Activated CD4-positive, alpha-beta T cell treated with anti-CD3 and anti-CD28 coated beads, Interleukin-2, amount 10 ng/mL, durations not matched to agents 24 days and 14 days (primary cell): ENCODE measurements at regions of chr16 and their contacts with region 1.

Region 1: DNA sequence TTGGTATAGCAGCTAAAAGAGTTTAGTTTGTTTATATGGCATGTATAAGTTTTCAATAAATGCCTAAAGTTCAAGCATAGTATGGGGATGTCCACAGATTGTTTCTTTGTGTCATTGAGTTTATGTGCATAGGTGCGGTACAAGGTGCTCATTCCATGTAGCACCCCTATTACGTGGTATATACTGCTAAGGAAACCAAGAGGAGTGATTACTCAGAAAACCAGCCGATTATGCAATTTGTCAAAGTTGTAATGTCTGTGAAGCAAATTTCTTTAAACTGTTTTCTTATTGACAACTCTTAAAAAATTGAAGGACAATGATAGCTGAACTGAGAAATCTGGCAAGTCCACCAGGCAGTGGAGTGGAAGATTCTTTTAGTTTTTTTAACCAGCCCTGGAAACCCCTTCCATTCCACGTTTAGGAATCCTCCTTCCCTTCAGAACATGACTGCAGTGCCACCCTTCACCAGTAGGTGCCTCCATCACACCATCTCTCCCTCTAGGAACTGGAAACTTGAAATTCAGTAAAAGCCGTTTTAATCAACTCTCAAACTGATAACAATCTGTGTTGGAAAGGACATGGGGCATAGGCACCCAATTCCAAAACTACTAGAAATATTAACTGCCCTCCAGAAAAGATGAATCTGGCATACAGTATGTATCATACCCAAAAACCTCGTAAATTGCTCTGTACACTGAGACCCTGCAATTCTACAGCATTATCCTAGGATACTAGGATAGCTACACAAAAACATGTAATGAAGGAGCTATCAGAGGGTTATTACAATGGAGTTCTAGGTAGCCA is 43.5 kb downstream of the REXO5 start:
- DNase-seq: peak; percentile 91
- H3K4me3 Mint-ChIP-seq: no peak overlapping the region
- H3K27ac Mint-ChIP-seq: peak overlapping the region; percentile 41
- H3K4me1 Mint-ChIP-seq: peaks cover 25% of the 10 kb centered on the region
- H3K27me3 Mint-ChIP-seq: no peaks in the 10 kb centered on the region

Region 2: DNA sequence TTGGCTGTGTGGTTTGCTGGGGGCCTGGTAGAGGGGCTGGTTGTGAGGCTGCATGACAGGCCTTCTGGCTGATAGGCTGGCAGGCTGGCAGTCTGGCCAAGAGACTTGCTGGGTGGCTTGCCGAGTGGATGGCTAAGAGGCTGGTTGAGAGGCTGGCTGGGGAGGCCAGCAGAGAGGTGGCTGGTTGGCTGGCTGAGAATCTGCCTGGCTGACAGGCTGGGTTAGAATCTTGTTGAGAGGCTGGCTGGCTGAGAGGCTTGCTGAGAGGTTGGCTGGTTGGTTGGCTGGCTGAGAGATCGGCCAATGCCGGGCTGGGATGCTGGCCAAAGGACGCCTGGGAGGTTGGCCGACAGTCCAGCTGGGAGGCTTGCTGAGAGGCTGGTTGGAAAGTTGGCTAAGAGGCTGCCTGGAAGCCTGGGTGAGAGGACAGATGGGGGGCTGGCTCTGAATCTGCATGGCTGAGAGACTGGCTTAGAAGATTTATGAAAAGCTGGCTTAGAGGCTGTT is 237.8 kb before region 1 on chr16:
- intact Hi-C with region 1: no loop called
- DNase-seq: no peak
- H3K4me3 Mint-ChIP-seq: no peak overlapping the region
- H3K27ac Mint-ChIP-seq: no peak overlapping the region
- H3K4me1 Mint-ChIP-seq: no peaks in the 10 kb centered on the region
- H3K27me3 Mint-ChIP-seq: peaks cover 8% of the 10 kb centered on the region

Region 3: GRCh38 chr16:20806168-20807050 is 43.4 kb before region 1 on chr16 and contains the starts of genes ERI2 and REXO5:
- intact Hi-C with region 1: loop called (anchors 2 kb)
- DNase-seq: peak; percentile 93
- H3K4me3 Mint-ChIP-seq: peak within 1 kb of the TSS; percentile 94
- H3K27ac Mint-ChIP-seq: peak within 1 kb of the TSS; percentile 96
- H3K4me1 Mint-ChIP-seq: peaks cover 24% of the 10 kb centered on the region
- H3K27me3 Mint-ChIP-seq: no peaks in the 10 kb centered on the region
- total RNA-seq, gene ERI2: 15.1 and 15.7 TPM in 2 replicates
- total RNA-seq, gene REXO5: 9.3 and 11.7 TPM in 2 replicates

Region 4: GRCh38 chr16:20944861-20945574 is 95.2 kb after region 1 on chr16:
- intact Hi-C with region 1: loop called (anchors 2 kb)
- DNase-seq: peak; percentile 89
- H3K4me3 Mint-ChIP-seq: no peak overlapping the region
- H3K27ac Mint-ChIP-seq: peak overlapping the region; percentile 67
- H3K4me1 Mint-ChIP-seq: peaks cover 40% of the 10 kb centered on the region
- H3K27me3 Mint-ChIP-seq: no peaks in the 10 kb centered on the region

Region 5: GRCh38 chr16:21001262-21001661 is 151.5 kb after region 1 on chr16:
- intact Hi-C with region 1: loop called (anchors 2 kb)
- DNase-seq: peak; percentile 75
- H3K4me3 Mint-ChIP-seq: no peak overlapping the region
- H3K27ac Mint-ChIP-seq: no peak overlapping the region
- H3K4me1 Mint-ChIP-seq: no peaks in the 10 kb centered on the region
- H3K27me3 Mint-ChIP-seq: peaks cover 13% of the 10 kb centered on the region

Region 6: GRCh38 chr16:21083729-21084268 is 234.0 kb after region 1 on chr16:
- intact Hi-C with region 1: loop called (anchors 1 kb)
- DNase-seq: peak; percentile 87
- H3K4me3 Mint-ChIP-seq: no peak overlapping the region
- H3K27ac Mint-ChIP-seq: no peak overlapping the region
- H3K4me1 Mint-ChIP-seq: no peaks in the 10 kb centered on the region
- H3K27me3 Mint-ChIP-seq: peaks cover 8% of the 10 kb centered on the region

Region 7: DNA sequence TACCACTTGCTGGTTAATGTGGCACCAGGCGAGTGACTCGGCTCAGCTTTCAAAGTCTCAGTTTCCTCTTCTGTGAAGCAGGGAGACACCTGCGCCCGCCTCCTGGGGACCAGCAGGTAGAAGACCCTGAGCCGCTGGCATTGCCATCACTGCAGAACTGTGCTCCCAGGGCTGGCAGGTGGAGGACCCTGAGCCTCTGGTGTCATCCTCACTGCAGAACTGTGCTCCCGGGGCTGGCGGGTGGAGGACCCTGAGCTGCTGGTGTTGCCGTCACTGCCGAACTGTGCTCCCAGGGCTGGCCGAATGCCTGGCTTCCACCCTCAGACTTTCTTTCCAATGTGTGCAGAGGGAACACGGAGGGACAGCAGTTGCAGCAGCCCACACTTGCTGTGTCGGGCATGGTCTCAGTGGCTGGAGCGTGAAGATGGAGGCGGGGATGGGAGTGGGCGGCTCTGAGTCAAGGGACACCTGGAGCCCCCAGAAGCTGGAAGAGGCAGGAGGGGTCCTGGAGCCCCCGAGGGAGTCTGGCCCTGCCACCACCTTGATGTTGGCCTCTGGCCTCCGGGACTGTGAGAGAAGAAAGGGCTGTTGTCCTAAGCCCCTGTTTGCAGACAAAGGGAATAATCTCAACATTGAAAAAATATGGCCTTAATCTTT is 673.8 kb after region 1 on chr16:
- intact Hi-C with region 1: no loop called
- DNase-seq: peak; percentile 67
- H3K4me3 Mint-ChIP-seq: no peak overlapping the region
- H3K27ac Mint-ChIP-seq: no peak overlapping the region
- H3K4me1 Mint-ChIP-seq: peaks cover 7% of the 10 kb centered on the region
- H3K27me3 Mint-ChIP-seq: peaks cover 12% of the 10 kb centered on the region